Uterus (tissue), 4 donors: ENCODE measurements at regions of chr14 and their contacts with region 1.

Region 1: GRCh38 chr14:103546652-103547454 is 15.6 kb downstream of the BAG5 start:
- DNase-seq: peak; percentile 74 to 79
- H3K4me3 ChIP-seq: no peak overlapping the region
- H3K27ac ChIP-seq: no peak overlapping the region
- H3K4me1 ChIP-seq: peaks cover 14 to 39% of the 10 kb centered on the region in 2 donors
- H3K27me3 ChIP-seq: no peaks in the 10 kb centered on the region
- CTCF ChIP-seq: peak; percentile 89 to 96 (median 93)
- POLR2A ChIP-seq: peak in 1 of 2 donors; percentile 12

Region 2: GRCh38 chr14:103500148-103500990 is 46.5 kb before region 1 on chr14:
- intact Hi-C with region 1: loop called (anchors 5 kb)
- DNase-seq: peak; percentile 87 to 92
- H3K4me3 ChIP-seq: no peak overlapping the region
- H3K27ac ChIP-seq: peak overlapping the region; percentile 9 to 54
- H3K4me1 ChIP-seq: no peaks in the 10 kb centered on the region
- H3K27me3 ChIP-seq: no peaks in the 10 kb centered on the region
- CTCF ChIP-seq: peak; percentile 86 to 90 (median 88)
- POLR2A ChIP-seq: no peak

Region 3: DNA sequence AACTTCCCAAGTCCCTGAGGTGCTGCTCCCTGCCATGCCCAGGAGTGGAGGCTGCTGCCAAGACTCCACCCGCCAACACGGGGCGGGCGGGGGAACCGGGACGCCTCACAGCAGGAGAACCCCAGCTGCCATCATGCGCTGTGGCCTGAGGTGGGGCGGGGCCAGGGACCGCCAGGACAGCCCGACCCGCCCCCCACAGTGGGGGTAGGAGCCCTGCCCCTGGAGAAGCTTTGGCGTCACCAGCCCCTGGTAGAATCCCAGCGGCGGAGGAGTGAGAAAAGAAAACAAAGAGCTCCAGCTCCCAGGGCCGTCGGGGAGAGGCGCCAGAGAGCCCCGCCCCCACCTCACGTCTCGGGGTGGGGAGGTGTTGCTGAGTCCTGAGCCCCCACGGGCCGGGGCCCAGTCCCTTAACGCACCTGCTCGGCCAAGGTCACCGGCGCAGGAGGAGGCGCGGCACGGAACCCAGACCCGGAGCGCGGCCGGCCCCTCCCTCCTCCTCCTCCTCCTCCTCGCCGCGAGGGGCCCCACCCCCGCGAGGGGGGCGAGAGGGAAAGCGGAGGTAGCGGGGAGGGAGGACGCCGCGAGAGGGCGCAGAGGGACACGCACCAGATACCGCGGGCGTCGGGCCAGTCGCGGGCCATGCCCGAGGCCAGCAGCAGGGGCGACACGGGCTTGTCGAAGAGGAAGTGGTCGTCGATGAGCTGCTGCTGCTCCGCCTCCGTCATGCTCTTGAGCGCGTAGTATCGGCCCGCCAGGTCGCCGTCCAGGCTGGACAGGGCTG is 26.0 kb before region 1 on chr14:
- intact Hi-C with region 1: loop called (anchors 2 kb)
- DNase-seq: peak; percentile 84 to 86
- H3K4me3 ChIP-seq: peak overlapping the region; percentile 49 to 51
- H3K27ac ChIP-seq: peak overlapping the region; percentile 82 to 84
- H3K4me1 ChIP-seq: peaks cover 0 to 27% of the 10 kb centered on the region in 2 donors
- H3K27me3 ChIP-seq: no peaks in the 10 kb centered on the region
- CTCF ChIP-seq: peak; percentile 57 to 77 (median 64)
- POLR2A ChIP-seq: peak in 1 of 2 donors; percentile 53